Activated B cell treated with CpG ODN at 0.5 μM for 24 hours (primary cell): ENCODE measurements at regions of chr11 and their contacts with region 1.

Region 1: DNA sequence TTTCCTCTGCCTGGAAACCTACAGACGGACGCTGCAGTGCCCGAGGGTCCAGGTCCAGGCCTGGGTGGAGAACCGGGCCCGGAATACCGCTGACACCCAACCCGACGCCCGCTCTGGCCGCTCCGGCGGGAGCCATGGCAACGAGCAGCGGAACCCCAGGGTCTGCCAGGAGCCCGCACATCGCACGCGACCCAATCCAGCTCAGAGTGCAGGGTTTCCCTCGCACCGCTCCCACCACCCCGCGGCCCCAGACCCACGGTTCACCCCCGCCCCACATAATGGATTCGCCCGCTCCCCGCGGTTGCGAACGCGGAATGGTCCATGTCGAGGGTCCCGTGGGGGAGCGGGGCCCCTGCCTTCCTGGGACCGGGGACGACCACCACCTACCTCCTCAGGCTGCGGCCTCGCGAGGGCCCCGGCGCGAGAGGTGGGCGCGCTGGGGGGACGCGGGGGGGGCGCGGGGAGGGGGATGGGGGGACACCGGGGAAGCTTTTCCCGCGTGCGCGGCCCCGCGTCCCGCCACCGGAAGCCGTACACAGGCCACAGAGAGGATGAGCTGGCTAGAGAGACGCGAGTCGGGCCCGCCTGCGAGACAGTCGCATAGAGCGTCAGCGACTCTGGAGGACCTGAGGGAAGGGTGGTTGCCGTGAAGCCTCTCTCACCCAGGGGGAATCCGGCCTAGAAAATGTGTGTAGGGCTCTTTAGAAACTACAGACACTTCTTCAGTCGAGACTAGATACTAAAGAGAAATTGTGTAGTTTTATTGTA is at the start of gene SSRP1:
- DNase-seq: peak; percentile 77
- ATAC-seq: peak; percentile 97
- H3K4me3 Mint-ChIP-seq: peak within 1 kb of the TSS; percentile 94
- H3K27ac Mint-ChIP-seq: peak within 1 kb of the TSS; percentile 98
- H3K4me1 Mint-ChIP-seq: peaks cover 27% of the 10 kb centered on the region
- H3K27me3 Mint-ChIP-seq: peaks cover 2% of the 10 kb centered on the region
- CTCF ChIP-seq: no peak
- total RNA-seq, gene SSRP1: 120 and 127 TPM in 2 replicates

Region 2: GRCh38 chr11:57324886-57325734 is 10.4 kb before region 1 on chr11 and contains the start of gene TNKS1BP1:
- CTCF ChIA-PET with region 1: interaction called, 8 read pairs
- POLR2A ChIA-PET with region 1: interaction called, 92 read pairs
- intact Hi-C with region 1: loop called (anchors 1 kb)
- DNase-seq: peak; percentile 89
- ATAC-seq: peak; percentile 88
- H3K4me3 Mint-ChIP-seq: peak within 1 kb of the TSS; percentile 89
- H3K27ac Mint-ChIP-seq: peak within 1 kb of the TSS; percentile 95
- H3K4me1 Mint-ChIP-seq: peaks cover 34% of the 10 kb centered on the region
- H3K27me3 Mint-ChIP-seq: no peaks in the 10 kb centered on the region
- CTCF ChIP-seq: no peak
- total RNA-seq, gene TNKS1BP1: 13.9 and 14.3 TPM in 2 replicates

Region 3: GRCh38 chr11:57354699-57355098 is 19.2 kb after region 1 on chr11:
- CTCF ChIA-PET with region 1: no interaction called
- POLR2A ChIA-PET with region 1: no interaction called
- intact Hi-C with region 1: no loop called
- DNase-seq: no peak
- ATAC-seq: no peak
- H3K4me3 Mint-ChIP-seq: no peak overlapping the region
- H3K27ac Mint-ChIP-seq: no peak overlapping the region
- H3K4me1 Mint-ChIP-seq: peaks cover 13% of the 10 kb centered on the region
- H3K27me3 Mint-ChIP-seq: peaks cover 27% of the 10 kb centered on the region
- CTCF ChIP-seq: no peak

Region 4: GRCh38 chr11:57657194-57658022 is 321.9 kb after region 1 on chr11 and contains the start of gene CLP1:
- CTCF ChIA-PET with region 1: no interaction called
- POLR2A ChIA-PET with region 1: interaction called, 4 read pairs
- intact Hi-C with region 1: loop called (anchors 1 kb)
- DNase-seq: peak; percentile 96
- ATAC-seq: peak; percentile 97
- H3K4me3 Mint-ChIP-seq: peak within 1 kb of the TSS; percentile 99
- H3K27ac Mint-ChIP-seq: peak within 1 kb of the TSS; percentile 94
- H3K4me1 Mint-ChIP-seq: peaks cover 23% of the 10 kb centered on the region
- H3K27me3 Mint-ChIP-seq: no peaks in the 10 kb centered on the region
- CTCF ChIP-seq: no peak
- total RNA-seq, gene CLP1: 20.4 and 20.9 TPM in 2 replicates